RWPE1 (cell line): ENCODE measurements at regions of chr13 and their contacts with region 1.

Region 1: DNA sequence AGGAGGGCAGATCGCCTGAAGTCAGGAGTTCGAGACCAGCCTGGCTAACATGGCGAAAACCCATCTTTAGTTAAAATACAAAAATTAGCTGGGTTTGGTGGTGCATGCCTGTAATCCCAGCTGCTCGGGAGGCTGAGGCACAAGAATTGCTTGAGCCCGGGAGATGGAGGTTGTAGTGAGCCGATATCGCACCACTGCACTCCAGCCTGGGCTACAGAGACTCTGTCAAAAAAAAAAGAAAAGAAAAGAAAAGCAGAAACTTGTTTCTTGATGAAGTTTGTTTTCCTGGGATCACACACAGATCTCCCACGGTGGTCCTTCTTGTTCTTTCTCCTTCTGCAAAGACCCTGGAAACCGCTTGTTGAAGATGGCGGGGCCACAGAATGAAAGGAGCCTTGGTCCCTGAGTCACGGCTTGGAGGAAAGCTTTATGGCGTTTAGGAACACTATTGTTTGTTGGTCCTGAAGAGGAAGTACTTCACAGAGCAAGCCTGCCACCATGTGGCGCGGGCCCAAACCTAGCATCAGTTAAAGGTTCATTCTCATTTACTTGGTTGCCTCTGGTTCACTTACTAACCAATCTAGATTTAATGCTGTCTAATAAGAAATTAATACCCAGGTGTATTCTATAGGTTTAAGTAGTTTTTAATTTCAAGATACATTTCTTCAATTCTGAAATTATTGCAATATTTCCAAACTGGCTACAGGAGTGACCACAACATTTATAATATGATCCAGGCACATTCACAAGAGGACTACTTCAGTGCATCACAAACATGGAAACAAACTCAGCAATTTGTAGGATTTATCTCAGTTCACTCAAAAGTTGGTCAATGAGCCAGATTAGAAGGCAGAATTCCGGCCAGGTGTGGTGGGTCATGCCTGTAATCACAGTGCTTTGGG is 21.3 kb upstream of the ARL11 start:
- DNase-seq: peak; percentile 69
- H3K27ac ChIP-seq: no peak overlapping the region
- CTCF ChIP-seq: peak; percentile 83

Region 2: DNA sequence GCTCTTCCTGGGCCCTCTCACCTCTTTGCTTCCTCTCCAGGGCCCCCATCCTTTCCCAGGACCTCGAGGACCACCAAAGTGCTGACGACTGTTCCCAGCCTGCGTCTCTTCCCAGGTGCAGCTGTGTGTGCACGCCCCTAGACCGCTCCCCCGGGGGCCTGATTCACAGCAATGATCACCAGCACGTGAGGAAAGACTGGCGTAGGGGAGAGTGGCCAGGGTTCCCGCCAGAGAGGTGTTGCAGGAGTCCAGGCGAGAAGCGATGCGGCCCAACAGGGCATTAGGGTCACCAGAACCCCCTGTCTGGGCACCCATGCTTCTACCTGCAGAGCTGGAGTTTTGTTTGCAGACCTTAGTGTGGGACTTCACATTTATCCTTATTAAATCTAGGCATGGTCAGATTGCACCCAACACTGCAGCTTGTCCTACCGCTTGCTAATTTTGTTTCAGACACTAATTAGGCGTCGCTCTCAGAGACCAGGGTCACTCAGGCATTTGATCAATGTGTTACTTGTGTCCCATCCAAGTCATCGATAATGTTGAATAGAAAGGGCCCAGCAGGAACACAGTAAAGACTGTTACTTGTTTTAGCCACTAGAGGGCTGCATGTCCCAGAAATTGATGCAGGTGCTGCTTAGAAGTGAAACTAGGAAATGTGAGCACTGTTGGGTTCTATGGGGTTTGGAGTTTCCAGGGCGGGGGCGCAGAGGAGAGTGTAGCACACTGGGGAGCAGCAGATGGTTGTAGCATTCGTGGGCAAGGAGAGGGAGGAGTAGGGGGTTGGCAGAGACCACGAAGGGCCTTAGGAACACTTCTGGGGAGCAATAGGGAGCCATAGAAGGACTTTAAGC is 306.0 kb before region 1 on chr13:
- CTCF ChIA-PET with region 1: interaction called, 20 read pairs
- POLR2A ChIA-PET with region 1: no interaction called
- DNase-seq: peak; percentile 68
- H3K27ac ChIP-seq: no peak overlapping the region
- CTCF ChIP-seq: peak; percentile 89

Region 3: DNA sequence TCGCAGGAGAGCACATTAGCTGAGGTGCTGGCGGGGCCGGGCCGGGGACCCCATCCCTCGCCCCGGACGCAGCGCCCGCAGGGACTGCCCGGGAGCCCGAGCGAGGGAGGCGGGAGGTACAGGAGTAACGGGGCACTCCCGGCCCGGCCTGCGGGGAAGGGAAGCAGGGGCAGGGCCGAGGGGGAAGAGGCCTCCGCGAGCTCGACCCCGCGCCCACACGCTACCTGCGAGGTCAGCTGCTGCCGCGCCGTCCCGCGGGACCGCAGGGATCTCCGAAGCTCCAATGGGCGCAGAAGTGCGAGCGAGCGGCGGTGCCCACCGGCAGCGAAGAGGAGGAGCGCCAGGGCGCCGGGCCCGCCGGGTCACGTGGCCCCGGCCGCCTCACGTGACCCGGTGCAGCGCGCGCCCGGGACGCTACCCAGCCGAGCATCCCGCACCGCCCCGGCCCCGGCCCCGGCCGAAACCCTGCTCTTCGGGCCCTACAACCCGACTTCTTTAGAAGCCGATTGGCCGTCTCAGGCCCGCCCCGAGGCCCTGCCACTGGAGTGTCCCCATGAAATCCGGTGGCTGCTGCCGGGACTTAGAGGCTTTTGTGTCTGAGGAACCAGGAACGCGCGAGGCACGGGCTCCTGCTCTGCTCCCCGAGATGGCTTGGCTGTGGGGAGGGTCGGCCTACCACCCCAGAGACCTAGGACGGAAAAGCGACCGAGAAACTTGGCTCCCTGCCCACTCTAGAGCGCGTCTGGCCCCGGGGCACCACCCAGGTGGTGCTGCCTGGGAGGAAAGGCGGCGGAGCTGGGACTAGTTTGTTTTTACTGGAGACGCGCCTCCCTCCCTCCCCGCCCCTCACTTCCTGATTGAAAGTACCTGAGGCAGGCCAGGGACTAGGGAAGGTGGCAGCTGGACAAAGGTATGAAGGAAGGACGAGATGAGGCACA is 21.5 kb before region 1 on chr13 and contains the start of gene RCBTB1:
- CTCF ChIA-PET with region 1: interaction called, 10 read pairs
- POLR2A ChIA-PET with region 1: no interaction called
- DNase-seq: peak; percentile 84
- H3K27ac ChIP-seq: peak within 1 kb of the TSS; percentile 87
- CTCF ChIP-seq: no peak